Pancreas (tissue), 10 donors: ENCODE measurements at regions of chr2 and their contacts with region 1.

Region 1: DNA sequence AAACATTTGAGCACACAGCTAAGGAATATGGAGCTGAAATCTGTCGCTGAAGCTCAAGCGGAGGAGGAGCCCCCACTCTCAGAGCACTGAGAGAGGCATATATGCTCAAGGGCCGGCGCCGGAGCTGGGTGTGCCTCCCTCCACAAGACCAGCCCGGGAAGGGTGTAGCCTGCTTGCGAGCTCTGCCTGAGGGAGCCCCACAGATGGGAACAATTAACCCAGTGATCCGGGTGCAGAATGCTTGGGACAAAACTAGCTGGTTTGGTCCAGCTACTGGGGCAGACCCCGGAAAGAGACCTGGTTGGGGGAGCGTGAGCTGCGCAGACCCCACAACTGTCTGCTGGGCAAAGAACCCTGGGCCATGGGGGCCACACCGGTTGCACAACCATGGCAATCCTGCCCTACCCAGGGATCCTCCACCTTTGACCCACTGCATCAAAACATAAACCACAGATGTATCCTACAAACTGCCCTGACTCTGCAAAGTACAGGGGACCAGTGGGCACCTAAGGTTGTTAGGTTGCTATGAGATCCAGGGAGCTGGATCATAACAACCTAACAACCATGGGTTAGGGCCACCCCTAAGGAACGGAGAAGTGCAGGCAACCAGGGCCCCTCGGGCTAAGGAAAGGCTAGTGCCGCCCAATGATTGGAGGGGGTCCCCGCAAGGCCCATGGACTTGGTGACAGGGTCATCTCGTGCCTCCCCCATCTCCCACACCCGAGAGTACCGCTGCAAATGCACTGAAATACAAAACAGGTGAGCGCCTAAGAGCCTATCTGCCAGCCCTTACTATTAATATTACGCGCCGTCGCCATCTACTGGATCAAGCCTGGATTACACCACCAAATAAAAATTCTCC is 53.4 kb upstream of the SCN1A start:
- DNase-seq: peak; percentile 39 to 81 (median 55)
- ATAC-seq: peak; percentile 96 to 100 (median 97)
- H3K4me3 ChIP-seq: no peak overlapping the region
- H3K27ac ChIP-seq: no peak overlapping the region
- H3K4me1 ChIP-seq: no peaks in the 10 kb centered on the region
- H3K27me3 ChIP-seq: no peaks in the 10 kb centered on the region
- CTCF ChIP-seq: peak in 3 of 4 donors; percentile 22 to 44 (median 41)

Region 2: DNA sequence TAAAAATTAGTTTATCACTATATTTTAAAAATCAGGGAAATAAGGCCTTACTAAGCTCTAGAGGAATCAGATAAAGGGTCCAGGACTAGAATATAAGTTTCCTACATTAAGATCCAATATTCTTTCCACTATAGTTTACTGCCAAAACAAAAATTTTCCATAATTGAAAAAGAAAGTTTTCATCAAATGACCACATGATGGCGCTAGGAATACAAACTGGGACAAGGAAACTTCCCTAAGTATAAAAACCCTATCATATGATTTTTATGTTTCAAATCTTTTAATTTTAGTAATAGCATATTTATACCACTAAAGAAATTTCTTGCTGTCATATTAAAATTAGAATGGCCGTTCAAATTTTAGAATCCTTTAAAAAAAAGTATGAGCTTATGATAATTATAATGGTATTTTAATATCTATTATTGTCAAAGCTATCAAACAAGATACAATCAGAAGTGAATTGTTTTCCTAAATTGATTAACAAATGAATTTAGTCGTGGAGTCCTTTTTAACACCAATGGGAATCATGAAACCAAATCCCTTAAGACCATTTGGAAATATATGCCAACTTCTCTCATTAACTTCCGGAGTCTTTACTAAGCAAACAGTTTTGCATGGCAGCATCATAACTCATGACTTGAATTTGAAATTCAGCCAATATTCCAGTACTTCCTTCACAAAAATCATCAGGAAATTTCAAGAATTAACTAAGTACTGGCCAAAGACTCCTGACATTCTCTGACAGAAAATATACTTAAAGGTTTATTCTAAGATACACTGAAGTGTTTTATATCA is 123.6 kb before region 1 on chr2:
- intact Hi-C with region 1: loop called in 1 of 3 experiments (anchors 10 kb)
- DNase-seq: no peak
- ATAC-seq: peak; percentile 48 to 80 (median 68)
- H3K4me3 ChIP-seq: no peak overlapping the region
- H3K27ac ChIP-seq: no peak overlapping the region
- H3K4me1 ChIP-seq: peaks cover 0 to 7% (median 4%) of the 10 kb centered on the region in 3 donors
- H3K27me3 ChIP-seq: no peaks in the 10 kb centered on the region
- CTCF ChIP-seq: peak in 3 of 4 donors; percentile 30 to 54 (median 41)

Region 3: GRCh38 chr2:166246901-166247300 is 65.7 kb after region 1 on chr2:
- intact Hi-C with region 1: no loop called
- DNase-seq: no peak
- ATAC-seq: peak in 1 of 4 donors; percentile 32
- H3K4me3 ChIP-seq: no peak overlapping the region
- H3K27ac ChIP-seq: no peak overlapping the region
- H3K4me1 ChIP-seq: no peaks in the 10 kb centered on the region
- H3K27me3 ChIP-seq: no peaks in the 10 kb centered on the region
- CTCF ChIP-seq: no peak

Region 4: GRCh38 chr2:166293984-166294383 is 112.8 kb after region 1 on chr2:
- intact Hi-C with region 1: no loop called
- DNase-seq: no peak
- ATAC-seq: no peak
- H3K4me3 ChIP-seq: no peak overlapping the region
- H3K27ac ChIP-seq: no peak overlapping the region
- H3K4me1 ChIP-seq: no peaks in the 10 kb centered on the region
- H3K27me3 ChIP-seq: no peaks in the 10 kb centered on the region
- CTCF ChIP-seq: no peak